Prostate gland (tissue), 2 donors: ENCODE measurements at regions of chr19 and their contacts with region 1.

Region 1: DNA sequence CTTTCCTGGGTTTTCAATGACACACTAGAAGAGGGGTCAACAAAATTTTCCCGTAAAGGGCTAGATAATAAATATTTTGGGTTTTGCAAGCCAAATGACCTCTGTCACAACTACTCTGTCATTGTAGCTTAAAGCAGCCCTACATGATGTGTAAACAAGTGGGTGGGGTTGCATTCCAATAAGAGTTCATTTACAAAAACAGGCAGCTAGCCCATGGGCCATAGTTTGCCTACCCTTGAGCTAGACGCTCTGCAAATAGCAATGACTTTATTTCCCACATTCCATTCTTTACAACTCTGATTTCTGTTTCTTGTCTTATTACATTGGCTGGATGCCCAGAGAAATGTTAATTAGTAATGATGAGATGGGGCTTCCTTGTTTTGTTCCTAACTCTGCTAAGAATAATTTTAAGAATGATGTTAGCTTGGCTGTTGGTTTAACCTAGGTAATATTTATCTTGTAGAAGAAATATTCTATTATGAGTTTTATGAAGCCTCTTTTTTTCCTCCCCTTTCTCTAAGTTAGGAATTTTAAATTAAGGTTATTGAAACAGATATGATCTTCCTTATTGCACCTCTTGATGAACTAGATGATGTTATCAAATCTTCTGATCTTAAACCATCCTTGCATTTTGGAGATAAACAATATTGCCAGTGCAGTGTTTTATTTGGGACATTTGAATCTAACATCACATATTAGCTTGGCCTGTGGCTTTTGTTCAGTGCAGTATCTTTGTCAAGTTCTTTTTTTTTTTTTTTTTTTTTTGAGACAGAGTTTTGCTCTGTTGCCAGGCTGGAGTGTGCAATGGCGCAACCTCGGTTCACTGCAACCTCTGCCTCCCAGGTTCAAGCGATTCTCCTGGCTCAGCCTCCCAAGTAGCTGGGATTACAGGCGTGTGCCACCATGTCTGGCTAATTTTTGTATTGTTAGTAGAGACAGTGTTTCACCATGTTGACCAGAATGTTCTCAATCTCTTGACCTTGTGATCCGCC is 76.3 kb downstream of the ZNF557 start:
- DNase-seq: no peak
- H3K4me3 ChIP-seq: no peak overlapping the region
- H3K27ac ChIP-seq: no peak overlapping the region
- H3K4me1 ChIP-seq: no peaks in the 10 kb centered on the region
- H3K27me3 ChIP-seq: no peaks in the 10 kb centered on the region
- CTCF ChIP-seq: no peak
- POLR2A ChIP-seq: no peak

Region 2: DNA sequence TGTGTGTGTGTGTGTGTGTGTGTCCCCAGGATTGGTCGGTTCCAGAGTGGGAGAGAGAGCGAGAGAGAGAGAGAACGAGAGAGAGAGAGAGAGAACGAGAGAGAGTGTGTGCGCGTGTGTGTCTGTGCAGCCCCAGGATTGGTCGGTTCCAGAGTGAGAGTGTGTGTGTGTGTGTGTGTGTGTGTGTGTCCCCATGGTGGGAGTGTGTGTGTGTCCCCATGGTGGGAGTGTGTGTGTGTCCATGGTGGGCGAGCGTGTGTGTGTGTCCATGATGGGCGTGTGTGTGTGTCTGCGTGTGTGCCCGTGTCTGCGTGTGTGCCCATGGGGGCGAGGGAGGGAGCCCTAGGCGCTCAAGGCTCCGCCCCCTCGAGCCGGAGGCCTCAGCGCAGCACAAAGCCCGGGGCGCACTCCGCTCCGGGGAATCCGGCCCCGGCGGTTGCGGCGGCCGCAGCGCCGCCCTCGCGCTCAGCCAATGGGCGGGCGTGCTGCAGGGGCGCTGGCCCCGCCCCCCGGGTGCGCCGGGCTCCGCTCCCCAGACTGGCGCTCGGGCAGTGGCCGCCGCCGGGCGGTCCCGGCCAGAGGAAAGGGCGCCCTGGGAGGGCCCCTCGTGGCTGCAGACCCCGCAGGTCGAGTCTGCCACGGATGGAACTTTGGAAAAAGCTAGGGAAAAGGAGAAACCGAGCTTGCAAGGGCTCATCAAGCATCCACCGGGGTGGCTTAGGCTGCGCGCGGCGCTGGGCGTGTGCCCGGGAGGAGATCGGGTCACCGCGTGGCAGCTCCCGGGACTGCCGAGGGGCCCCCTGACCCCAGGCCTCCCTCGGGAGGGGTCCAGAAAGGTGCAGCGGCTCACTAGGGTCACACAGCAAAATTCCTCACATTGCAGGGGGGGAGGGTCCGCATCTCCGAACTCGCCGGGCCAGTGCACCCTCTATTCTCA is 52.2 kb after region 1 on chr19:
- intact Hi-C with region 1: no loop called
- DNase-seq: peak; percentile 90
- H3K4me3 ChIP-seq: peak overlapping the region; percentile 54 to 72
- H3K27ac ChIP-seq: peak overlapping the region; percentile 83 to 86
- H3K4me1 ChIP-seq: no peaks in the 10 kb centered on the region
- H3K27me3 ChIP-seq: no peaks in the 10 kb centered on the region
- CTCF ChIP-seq: peak in 2 of 4 experiments; percentile 27 to 32
- POLR2A ChIP-seq: peak; percentile 62

Region 3: GRCh38 chr19:7340959-7341837 is 195.4 kb after region 1 on chr19:
- intact Hi-C with region 1: loop called (anchors 5 kb)
- DNase-seq: peak; percentile 53
- H3K4me3 ChIP-seq: no peak overlapping the region
- H3K27ac ChIP-seq: no peak overlapping the region
- H3K4me1 ChIP-seq: no peaks in the 10 kb centered on the region
- H3K27me3 ChIP-seq: no peaks in the 10 kb centered on the region
- CTCF ChIP-seq: peak; percentile 88 to 95 (median 91)
- POLR2A ChIP-seq: no peak